GM12878 (cell line): ENCODE measurements at regions of chr1 and their contacts with region 1.

Region 1: DNA sequence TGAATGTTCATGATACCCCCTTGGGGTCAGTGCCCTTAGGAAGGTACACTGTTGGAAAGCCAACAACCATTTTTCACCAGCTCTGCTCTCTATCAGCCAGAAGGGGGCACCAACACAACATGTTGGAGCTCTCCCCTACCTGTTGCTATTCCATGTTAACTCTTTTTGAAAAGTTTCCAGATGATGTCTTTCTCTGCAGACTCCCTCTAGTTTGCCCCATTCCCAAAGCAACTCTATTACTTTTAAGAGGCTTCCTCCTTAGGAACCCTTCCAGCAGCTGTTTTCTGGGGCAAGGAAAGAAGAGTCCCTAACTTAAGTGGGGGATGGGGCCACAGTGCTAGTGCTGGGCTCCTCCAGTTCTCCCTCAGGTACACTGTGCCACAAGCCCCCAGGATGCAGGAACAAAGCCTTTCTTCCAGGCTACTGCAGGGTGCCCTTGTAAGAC is 22.9 kb upstream of the NDC1 start:
- DNase-seq: no peak
- ATAC-seq: peak; percentile 95
- H3K4me3 ChIP-seq: no peak overlapping the region
- H3K27ac ChIP-seq: no peak overlapping the region
- H3K4me1 ChIP-seq: no peaks in the 10 kb centered on the region; the same call in 1 of the 2 replicates
- H3K27me3 ChIP-seq: no peaks in the 10 kb centered on the region
- CTCF ChIP-seq: peak; percentile 83 to 88 (median 86)
- EP300 ChIP-seq: no peak
- POLR2A ChIP-seq: no peak
- RAD21 ChIP-seq: peak; percentile 91

Region 2: DNA sequence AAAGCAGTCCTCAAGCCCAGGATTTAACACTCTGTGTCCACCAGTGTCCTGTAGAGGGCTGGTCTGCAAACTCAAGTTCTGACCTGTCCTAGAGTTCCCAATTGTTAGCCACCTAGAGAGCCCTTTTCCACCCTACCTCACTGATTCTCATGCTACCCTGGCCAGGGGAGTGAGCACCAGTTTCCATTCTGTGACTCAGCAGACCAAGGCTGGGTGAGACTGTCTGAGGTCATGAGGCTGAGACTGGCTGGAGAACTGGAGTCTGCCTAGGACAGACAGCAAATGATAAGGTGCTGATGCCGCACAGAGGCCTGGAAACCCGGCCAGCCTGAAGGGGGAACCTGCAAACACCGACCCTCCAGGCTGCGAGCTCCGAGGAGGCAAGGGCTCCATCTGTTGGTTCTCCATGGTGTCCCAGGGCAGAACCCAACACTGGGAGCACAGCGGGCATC is 135.7 kb before region 1 on chr1:
- CTCF ChIA-PET with region 1: no interaction called
- POLR2A ChIA-PET with region 1: no interaction called
- RAD21 ChIA-PET with region 1: no interaction called
- SMC1A ChIA-PET with region 1: no interaction called
- in situ Hi-C with region 1: no loop called
- intact Hi-C with region 1: no loop called
- DNase-seq: no peak
- ATAC-seq: no peak
- H3K4me3 ChIP-seq: no peak overlapping the region
- H3K27ac ChIP-seq: no peak overlapping the region
- H3K4me1 ChIP-seq: no peaks in the 10 kb centered on the region
- H3K27me3 ChIP-seq: no peaks in the 10 kb centered on the region
- CTCF ChIP-seq: no peak
- EP300 ChIP-seq: no peak
- POLR2A ChIP-seq: no peak
- RAD21 ChIP-seq: no peak

Region 3: GRCh38 chr1:53739109-53739681 is 121.8 kb before region 1 on chr1 and contains the start of gene GLIS1:
- CTCF ChIA-PET with region 1: no interaction called
- POLR2A ChIA-PET with region 1: no interaction called
- RAD21 ChIA-PET with region 1: no interaction called
- SMC1A ChIA-PET with region 1: no interaction called
- in situ Hi-C with region 1: no loop called
- intact Hi-C with region 1: no loop called
- DNase-seq: no peak
- ATAC-seq: peak; percentile 100
- H3K4me3 ChIP-seq: peak within 1 kb of the TSS; percentile 65
- H3K27ac ChIP-seq: no peak within 1 kb of the TSS
- H3K4me1 ChIP-seq: no peaks in the 10 kb centered on the region
- H3K27me3 ChIP-seq: peaks cover 7 to 9% of the 10 kb centered on the region in 2 experiments
- CTCF ChIP-seq: no peak
- EP300 ChIP-seq: no peak
- POLR2A ChIP-seq: no peak
- RAD21 ChIP-seq: no peak
- polyA plus RNA-seq, gene GLIS1: not detected

Region 4: DNA sequence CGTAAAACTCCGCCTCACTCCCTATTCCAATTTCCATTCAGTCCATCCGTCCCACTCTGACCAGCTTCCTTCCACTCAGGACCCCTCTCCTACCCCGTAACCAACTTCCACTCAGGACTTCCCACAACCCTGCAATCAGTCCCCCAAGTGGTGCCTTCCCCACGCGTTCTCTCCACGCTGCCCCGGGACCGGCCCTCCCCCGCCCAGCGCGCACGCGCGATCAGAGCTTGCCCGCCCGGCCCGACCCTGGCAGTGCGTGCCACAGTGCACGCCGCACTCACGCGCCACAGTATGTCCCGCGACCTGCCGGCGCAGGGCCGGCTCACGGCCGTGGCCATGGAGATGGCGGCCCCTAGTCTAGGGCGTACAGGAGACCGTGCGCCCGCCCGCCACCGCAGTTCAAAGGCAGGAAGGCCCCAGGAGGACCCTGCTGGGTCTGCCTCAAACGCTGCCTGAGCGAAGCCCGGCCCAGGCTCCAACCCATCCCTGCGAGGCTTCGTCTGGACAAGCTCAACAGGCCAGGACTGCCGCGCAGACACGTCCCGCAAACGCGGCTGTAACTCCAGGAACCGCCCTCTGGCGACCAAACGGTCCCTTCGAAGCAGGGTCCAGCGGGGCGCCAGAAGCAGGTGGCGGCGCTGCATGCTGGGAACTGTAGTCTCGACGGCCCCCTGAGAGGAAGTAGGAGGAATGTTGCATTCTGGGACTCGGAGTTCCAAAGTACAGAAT is 22.9 kb before region 1 on chr1 and contains the start of gene NDC1:
- CTCF ChIA-PET with region 1: interaction called, 11 read pairs
- POLR2A ChIA-PET with region 1: interaction called, 3 read pairs
- RAD21 ChIA-PET with region 1: interaction called, 3 read pairs
- SMC1A ChIA-PET with region 1: interaction called, 6 read pairs
- in situ Hi-C with region 1: no loop called
- intact Hi-C with region 1: no loop called
- DNase-seq: peak; percentile 91
- ATAC-seq: peak; percentile 92
- H3K4me3 ChIP-seq: peak within 1 kb of the TSS; percentile 88
- H3K27ac ChIP-seq: peak within 1 kb of the TSS; percentile 99
- H3K4me1 ChIP-seq: peaks cover 7% of the 10 kb centered on the region; the same call in 1 of the 2 replicates
- H3K27me3 ChIP-seq: no peaks in the 10 kb centered on the region
- CTCF ChIP-seq: peak; percentile 10 to 20 (median 14); a peak in 1 of 6 replicates
- EP300 ChIP-seq: peak; percentile 6 to 38; a peak in 1 of 4 replicates
- POLR2A ChIP-seq: peak; percentile 94
- RAD21 ChIP-seq: no peak
- polyA plus RNA-seq, gene NDC1: 20.2 to 24.9 TPM

Region 5: GRCh38 chr1:53878492-53879105 is 17.6 kb after region 1 on chr1:
- CTCF ChIA-PET with region 1: interaction called, 88 read pairs
- POLR2A ChIA-PET with region 1: no interaction called
- RAD21 ChIA-PET with region 1: interaction called, 7 read pairs
- SMC1A ChIA-PET with region 1: interaction called, 43 read pairs
- in situ Hi-C with region 1: no loop called
- intact Hi-C with region 1: no loop called
- DNase-seq: no peak
- ATAC-seq: peak; percentile 60; the same call in 2 of the 3 replicates
- H3K4me3 ChIP-seq: no peak overlapping the region
- H3K27ac ChIP-seq: no peak overlapping the region
- H3K4me1 ChIP-seq: no peaks in the 10 kb centered on the region
- H3K27me3 ChIP-seq: no peaks in the 10 kb centered on the region
- CTCF ChIP-seq: peak; percentile 48 to 55 (median 54)
- EP300 ChIP-seq: no peak
- POLR2A ChIP-seq: no peak
- RAD21 ChIP-seq: peak; percentile 67

Region 6: DNA sequence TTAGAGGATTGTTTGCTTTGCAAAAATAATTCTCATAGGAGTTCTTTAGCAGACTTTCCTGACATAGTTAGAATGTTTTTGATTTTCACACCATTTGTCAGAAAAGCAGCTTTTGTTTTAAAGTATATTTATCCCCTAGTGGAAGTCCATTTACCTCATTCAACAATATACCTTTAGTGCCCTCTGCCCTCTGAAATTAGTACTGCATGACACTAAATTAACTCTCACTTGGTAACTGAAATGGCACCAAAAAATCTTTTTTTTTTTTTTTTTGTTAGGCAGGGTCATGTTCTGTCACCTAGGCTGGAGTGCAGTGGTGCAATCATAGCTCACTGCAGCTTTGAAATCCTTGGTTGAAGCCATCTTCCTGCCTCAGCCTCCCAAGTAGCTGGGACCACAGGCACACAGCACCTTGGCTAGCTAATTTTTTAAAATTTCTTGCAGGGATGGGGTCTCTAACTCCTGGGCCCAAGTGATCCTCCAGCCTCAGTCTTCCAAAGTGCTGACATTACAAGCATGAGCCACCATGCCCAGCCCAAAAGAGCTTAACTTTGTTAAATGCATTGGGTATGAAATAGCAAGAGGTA is 98.8 kb after region 1 on chr1:
- CTCF ChIA-PET with region 1: interaction called, 232 read pairs
- POLR2A ChIA-PET with region 1: interaction called, 10 read pairs
- RAD21 ChIA-PET with region 1: interaction called, 72 read pairs
- SMC1A ChIA-PET with region 1: interaction called, 62 read pairs
- in situ Hi-C with region 1: loop called (anchors 5 kb)
- intact Hi-C with region 1: loop called (anchors 1 kb)
- DNase-seq: no peak
- ATAC-seq: peak; percentile 81
- H3K4me3 ChIP-seq: no peak overlapping the region
- H3K27ac ChIP-seq: no peak overlapping the region
- H3K4me1 ChIP-seq: peaks cover 11% of the 10 kb centered on the region; the same call in 1 of the 2 replicates
- H3K27me3 ChIP-seq: no peaks in the 10 kb centered on the region
- CTCF ChIP-seq: peak; percentile 42 to 67 (median 57); a peak in 5 of 6 replicates
- EP300 ChIP-seq: no peak
- POLR2A ChIP-seq: no peak
- RAD21 ChIP-seq: peak; percentile 74

Region 7: GRCh38 chr1:54081306-54082270 is 220.6 kb after region 1 on chr1:
- CTCF ChIA-PET with region 1: interaction called, 18 read pairs
- POLR2A ChIA-PET with region 1: no interaction called
- RAD21 ChIA-PET with region 1: interaction called, 10 read pairs
- SMC1A ChIA-PET with region 1: interaction called, 15 read pairs
- in situ Hi-C with region 1: no loop called
- intact Hi-C with region 1: loop called (anchors 10 kb)
- DNase-seq: peak; percentile 23
- ATAC-seq: peak; percentile 100
- H3K4me3 ChIP-seq: no peak overlapping the region
- H3K27ac ChIP-seq: no peak overlapping the region
- H3K4me1 ChIP-seq: no peaks in the 10 kb centered on the region
- H3K27me3 ChIP-seq: no peaks in the 10 kb centered on the region
- CTCF ChIP-seq: peak; percentile 66 to 89 (median 82)
- EP300 ChIP-seq: no peak
- POLR2A ChIP-seq: no peak
- RAD21 ChIP-seq: peak; percentile 56

Region 8: DNA sequence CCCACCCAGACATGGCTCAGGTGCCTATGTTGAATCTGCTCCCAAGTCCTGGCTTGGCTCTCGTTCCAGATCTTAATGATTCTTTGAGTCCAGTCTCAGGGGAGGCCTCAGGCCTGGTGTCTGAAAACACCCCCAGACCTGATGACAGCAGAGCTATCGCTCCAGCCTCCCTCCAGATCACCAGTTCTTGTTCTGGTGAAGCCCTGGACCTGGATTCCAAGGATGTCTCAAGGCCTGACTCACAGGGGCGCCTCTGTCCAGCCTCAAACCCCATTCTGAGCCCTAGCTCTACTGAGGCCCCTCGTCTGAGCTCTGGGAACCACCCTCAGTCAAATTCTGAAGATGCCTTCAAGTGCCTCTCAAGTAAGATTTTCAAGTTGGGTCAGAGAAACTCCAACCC is 792.0 kb after region 1 on chr1:
- CTCF ChIA-PET with region 1: no interaction called
- POLR2A ChIA-PET with region 1: no interaction called
- RAD21 ChIA-PET with region 1: no interaction called
- SMC1A ChIA-PET with region 1: no interaction called
- in situ Hi-C with region 1: no loop called
- intact Hi-C with region 1: no loop called
- DNase-seq: no peak
- ATAC-seq: no peak
- H3K4me3 ChIP-seq: no peak overlapping the region
- H3K27ac ChIP-seq: no peak overlapping the region
- H3K4me1 ChIP-seq: no peaks in the 10 kb centered on the region
- H3K27me3 ChIP-seq: no peaks in the 10 kb centered on the region
- CTCF ChIP-seq: no peak
- EP300 ChIP-seq: no peak
- POLR2A ChIP-seq: no peak
- RAD21 ChIP-seq: no peak